GM10248 (cell line): ENCODE measurements at regions of chr12 and their contacts with region 1.

Region 1: GRCh38 chr12:54032627-54033100 is at the start of gene HOXC5:
- DNase-seq: peak; percentile 86
- CTCF ChIP-seq: peak; percentile 93

Region 2: DNA sequence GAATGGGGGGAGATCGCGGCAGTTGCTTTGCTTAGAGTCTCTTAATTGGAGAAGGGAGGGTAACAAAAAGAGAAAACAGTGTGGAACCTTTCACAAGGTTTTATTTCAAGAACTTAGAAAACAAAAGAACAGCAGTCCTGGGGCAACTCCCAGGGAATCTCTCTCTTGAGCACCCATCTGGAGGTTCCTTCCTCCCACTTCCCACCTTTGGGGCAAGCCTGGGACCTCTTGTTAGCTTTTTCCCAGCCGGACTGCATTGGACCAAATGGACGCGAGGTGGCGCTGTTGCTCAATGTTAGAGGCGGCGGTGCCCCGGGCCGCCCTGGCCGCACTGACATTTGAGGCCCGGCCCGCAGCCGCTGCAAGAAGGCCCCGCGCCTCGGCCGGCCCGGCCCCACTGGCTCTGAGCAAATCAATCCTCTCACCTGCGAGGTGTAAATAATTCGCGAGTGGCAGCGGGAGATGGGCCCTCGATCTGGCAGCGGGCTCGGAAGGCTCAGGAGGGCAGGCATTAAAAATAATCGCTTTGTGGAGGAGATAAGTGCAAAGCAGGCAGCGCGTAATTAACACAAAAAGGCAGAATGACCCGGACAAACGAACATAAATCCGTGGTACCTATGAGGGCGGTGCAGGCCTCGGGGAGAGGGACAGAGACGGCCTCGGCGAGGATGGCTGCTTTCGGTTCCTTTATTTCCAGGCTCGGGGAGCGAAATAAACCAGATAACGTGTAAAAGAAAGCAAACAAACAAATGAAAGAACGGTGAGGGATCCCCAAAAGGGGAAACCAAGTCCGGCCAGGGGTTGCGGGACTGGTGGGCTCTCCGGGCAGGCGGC is 26.6 kb before region 1 on chr12:
- CTCF ChIA-PET with region 1: interaction called, 95 read pairs
- POLR2A ChIA-PET with region 1: no interaction called
- DNase-seq: peak; percentile 82
- CTCF ChIP-seq: peak; percentile 94

Region 3: GRCh38 chr12:54053751-54054741 is 21.4 kb after region 1 on chr12 and contains the start of gene HOXC4:
- CTCF ChIA-PET with region 1: interaction called, 30 read pairs
- POLR2A ChIA-PET with region 1: no interaction called
- DNase-seq: peak; percentile 78
- CTCF ChIP-seq: no peak

Region 4: DNA sequence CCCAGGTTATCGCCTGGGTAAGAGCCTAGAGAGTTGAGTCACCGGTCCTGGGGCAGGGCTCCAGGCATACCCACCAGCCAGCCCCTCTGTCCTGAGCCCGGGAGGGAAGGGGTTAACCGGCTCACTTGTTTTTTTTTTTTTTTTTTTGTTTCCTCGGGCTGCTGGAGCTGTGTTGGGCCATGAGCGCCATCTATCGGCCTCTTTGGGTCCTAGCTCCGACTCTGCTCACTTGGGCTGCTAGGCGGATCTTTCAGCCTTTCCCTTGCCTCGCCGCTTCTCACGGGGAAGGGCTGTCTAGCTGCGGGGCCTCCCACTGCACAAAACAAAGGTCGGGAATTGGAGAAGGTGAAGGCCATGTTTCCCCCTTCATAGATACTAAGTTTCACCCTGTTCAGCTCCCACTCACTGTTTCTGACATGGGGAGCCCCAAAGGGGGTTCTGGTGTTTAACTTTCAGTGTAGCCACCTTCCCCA is 158.9 kb after region 1 on chr12:
- CTCF ChIA-PET with region 1: interaction called, 214 read pairs
- POLR2A ChIA-PET with region 1: no interaction called
- DNase-seq: peak; percentile 81
- CTCF ChIP-seq: peak; percentile 81